Transverse colon (tissue), 4 donors: ENCODE measurements at regions of chr19 and their contacts with region 1.

Region 1: GRCh38 chr19:17681505-17682125 is 6.5 kb downstream of the UNC13A start:
- DNase-seq: no peak
- H3K4me3 ChIP-seq: no peak overlapping the region
- H3K27ac ChIP-seq: no peak overlapping the region
- H3K4me1 ChIP-seq: peaks cover 7 to 17% (median 12%) of the 10 kb centered on the region in 4 donors
- H3K27me3 ChIP-seq: peaks cover 81% of the 10 kb centered on the region
- CTCF ChIP-seq: no peak
- EP300 ChIP-seq: no peak
- POLR2A ChIP-seq: no peak

Region 2: GRCh38 chr19:17648786-17649185 is 32.8 kb before region 1 on chr19:
- in situ Hi-C with region 1: no loop called
- intact Hi-C with region 1: loop called (anchors 1 kb)
- DNase-seq: no peak
- H3K4me3 ChIP-seq: no peak overlapping the region
- H3K27ac ChIP-seq: no peak overlapping the region
- H3K4me1 ChIP-seq: no peaks in the 10 kb centered on the region
- H3K27me3 ChIP-seq: no peaks in the 10 kb centered on the region
- CTCF ChIP-seq: no peak
- EP300 ChIP-seq: no peak
- POLR2A ChIP-seq: no peak

Region 3: GRCh38 chr19:17747205-17748098 is 65.8 kb after region 1 on chr19:
- in situ Hi-C with region 1: no loop called
- intact Hi-C with region 1: no loop called
- DNase-seq: peak; percentile 95
- H3K4me3 ChIP-seq: peak overlapping the region; percentile 20 to 62 (median 36)
- H3K27ac ChIP-seq: peak overlapping the region in 2 of 4 donors; percentile 27 to 37
- H3K4me1 ChIP-seq: peaks cover 0 to 10% (median 7%) of the 10 kb centered on the region in 4 donors
- H3K27me3 ChIP-seq: no peaks in the 10 kb centered on the region
- CTCF ChIP-seq: no peak
- EP300 ChIP-seq: no peak
- POLR2A ChIP-seq: no peak

Region 4: GRCh38 chr19:17953869-17954268 is 272.3 kb after region 1 on chr19:
- in situ Hi-C with region 1: no loop called
- intact Hi-C with region 1: no loop called
- DNase-seq: no peak
- H3K4me3 ChIP-seq: no peak overlapping the region
- H3K27ac ChIP-seq: no peak overlapping the region
- H3K4me1 ChIP-seq: peaks cover 19 to 39% (median 31%) of the 10 kb centered on the region in 4 donors
- H3K27me3 ChIP-seq: peaks cover 88% of the 10 kb centered on the region
- CTCF ChIP-seq: no peak
- EP300 ChIP-seq: no peak
- POLR2A ChIP-seq: no peak